ENCODE measurements at regions of chr2 and their contacts with region 1.

Region 1: GRCh38 chr2:30987566-30987965 is 150.7 kb downstream of the GALNT14 start:
- DNase-seq: no peak
- H3K4me3 ChIP-seq: no peak overlapping the region
- H3K27ac ChIP-seq: no peak overlapping the region
- H3K4me1 ChIP-seq: no peaks in the 10 kb centered on the region
- H3K27me3 ChIP-seq: no peaks in the 10 kb centered on the region
- CTCF ChIP-seq: no peak

Region 2: DNA sequence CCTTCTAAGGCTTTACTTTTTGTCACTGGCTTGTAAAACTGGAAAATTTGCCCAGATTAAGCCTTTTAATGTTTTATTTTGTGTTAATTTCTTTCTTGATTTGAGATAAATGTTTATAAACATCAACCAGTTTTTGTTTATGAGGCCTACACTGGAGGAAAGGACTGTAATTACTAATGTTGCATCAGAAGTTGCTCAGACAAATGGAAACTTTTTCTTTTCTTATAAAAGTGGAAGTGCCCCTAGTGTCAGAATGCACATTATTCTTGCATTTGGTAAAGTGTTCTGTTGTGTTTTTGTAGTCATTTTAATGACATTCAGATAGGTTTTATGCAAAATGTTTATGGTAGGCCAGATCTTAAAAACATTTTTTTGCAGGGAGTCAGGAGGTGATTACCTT is 515.2 kb before region 1 on chr2:
- CTCF ChIA-PET with region 1: no interaction called
- POLR2A ChIA-PET with region 1: no interaction called
- intact Hi-C with region 1: no loop called
- DNase-seq: no peak
- H3K4me3 ChIP-seq: no peak overlapping the region
- H3K27ac ChIP-seq: peak overlapping the region; percentile 40
- H3K4me1 ChIP-seq: peaks cover 11% of the 10 kb centered on the region
- H3K27me3 ChIP-seq: no peaks in the 10 kb centered on the region
- CTCF ChIP-seq: no peak

Region 3: DNA sequence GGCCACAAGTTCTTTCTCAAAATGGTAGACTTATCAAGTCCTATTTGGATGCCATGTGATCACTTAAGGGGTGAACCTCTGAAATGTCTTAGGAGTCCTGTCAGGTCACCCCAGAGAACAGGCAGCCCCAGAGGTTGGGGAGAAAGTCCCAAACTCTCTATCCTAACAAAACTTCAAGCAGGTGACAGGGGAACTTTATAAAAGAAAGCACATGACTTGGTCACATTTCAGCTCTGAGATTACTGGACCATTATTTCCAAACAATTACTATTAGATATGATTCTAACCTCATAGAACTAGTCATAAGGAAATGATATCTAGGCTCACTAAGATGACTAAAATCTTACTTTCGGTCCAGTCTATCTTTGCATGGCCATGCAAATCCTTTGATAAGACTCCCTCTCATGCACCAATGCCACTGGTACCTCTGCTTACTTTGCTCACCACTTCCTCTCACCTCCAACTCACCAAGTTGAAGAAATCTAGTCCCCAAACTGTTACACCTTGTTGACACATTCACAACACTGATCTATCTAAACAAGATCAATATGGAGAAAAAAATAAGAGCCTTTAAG is 43.7 kb after region 1 on chr2:
- CTCF ChIA-PET with region 1: no interaction called
- POLR2A ChIA-PET with region 1: no interaction called
- intact Hi-C with region 1: loop called (anchors 1 kb)
- DNase-seq: no peak
- H3K4me3 ChIP-seq: no peak overlapping the region
- H3K27ac ChIP-seq: no peak overlapping the region
- H3K4me1 ChIP-seq: no peaks in the 10 kb centered on the region
- H3K27me3 ChIP-seq: no peaks in the 10 kb centered on the region
- CTCF ChIP-seq: no peak

Region 4: GRCh38 chr2:31207790-31208189 is 220.2 kb after region 1 on chr2:
- CTCF ChIA-PET with region 1: no interaction called
- POLR2A ChIA-PET with region 1: no interaction called
- intact Hi-C with region 1: no loop called
- DNase-seq: no peak
- H3K4me3 ChIP-seq: no peak overlapping the region
- H3K27ac ChIP-seq: no peak overlapping the region
- H3K4me1 ChIP-seq: no peaks in the 10 kb centered on the region
- H3K27me3 ChIP-seq: no peaks in the 10 kb centered on the region
- CTCF ChIP-seq: no peak

Measured in A673 (cell line).